ACHN (cell line): ENCODE measurements at regions of chr12 and their contacts with region 1.

Region 1: DNA sequence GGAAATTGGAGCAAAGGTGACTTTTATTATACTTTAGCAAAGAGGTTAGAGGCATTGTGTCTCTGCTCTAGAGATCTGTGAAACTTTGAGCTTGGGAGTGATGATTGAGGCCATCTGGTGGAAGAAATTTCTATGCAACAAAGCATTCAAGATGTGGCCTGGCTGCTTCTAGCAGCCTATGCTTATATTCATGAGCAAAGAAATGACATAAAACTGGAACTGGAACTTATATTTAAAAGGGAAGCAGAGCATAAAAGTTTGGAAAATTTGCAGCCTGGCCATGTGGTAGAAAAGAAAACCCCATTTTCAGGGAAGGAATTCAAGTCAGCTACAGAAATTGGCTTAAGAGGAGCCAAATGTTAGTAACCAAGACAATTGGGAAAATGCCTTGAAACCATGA is 70.4 kb downstream of the SDR9C7 start:
- DNase-seq: no peak

Region 2: GRCh38 chr12:56922031-56922430 is 58.2 kb after region 1 on chr12:
- in situ Hi-C with region 1: loop called (anchors 10 kb)
- DNase-seq: no peak